ENCODE measurements at regions of chr1 and their contacts with region 1.

Region 1: DNA sequence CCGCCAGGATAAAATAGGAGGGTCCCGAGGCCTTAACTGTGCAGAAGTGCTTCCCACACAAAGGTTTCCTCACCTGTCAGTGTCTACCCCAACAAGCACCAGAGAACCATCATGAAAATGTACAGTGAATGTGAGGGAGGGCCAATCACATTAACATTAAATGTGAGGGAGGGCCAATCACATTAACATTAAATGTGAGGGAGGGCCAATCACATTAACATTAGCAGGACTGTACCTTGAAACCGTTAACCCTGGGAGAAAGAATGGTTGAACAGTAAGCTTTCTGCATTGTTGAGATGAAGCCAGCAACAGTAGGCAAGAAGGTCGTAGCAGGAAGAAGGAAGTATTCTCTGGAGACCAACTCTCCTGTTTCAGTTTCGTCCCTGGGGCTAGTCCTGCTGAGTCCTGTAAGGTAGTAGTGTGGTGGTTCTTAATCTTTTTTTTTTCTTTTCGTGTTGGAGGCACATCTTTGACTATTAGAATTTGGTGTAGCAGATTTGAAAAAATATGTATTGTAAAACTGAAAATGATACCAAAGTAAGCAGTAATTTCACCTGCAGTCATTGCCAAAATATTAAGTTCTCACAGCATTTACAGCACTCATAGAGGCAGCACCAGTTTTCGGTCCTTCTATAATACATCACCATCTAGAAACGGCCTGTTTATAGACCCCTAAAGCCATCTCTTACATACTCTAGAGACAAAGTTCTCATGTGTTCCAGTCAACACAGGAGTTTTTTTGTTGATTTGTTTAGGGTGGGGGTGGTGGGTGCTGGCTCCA is 98.6 kb upstream of the PPP2R5A start:
- DNase-seq: peak in 3 of 9 donors; percentile 11 to 20 (median 15)
- ATAC-seq: peak; percentile 81
- H3K4me3 ChIP-seq: peak overlapping the region; percentile 38
- H3K4me3 Mint-ChIP-seq: peak overlapping the region; percentile 38 to 84 (median 80)
- H3K27ac ChIP-seq: peak overlapping the region; percentile 23
- H3K27ac Mint-ChIP-seq: peak overlapping the region; percentile 39 to 93 (median 87)
- H3K4me1 ChIP-seq: peaks cover 4 to 7% of the 10 kb centered on the region in 2 donors
- H3K4me1 Mint-ChIP-seq: peaks cover 15 to 38% (median 26%) of the 10 kb centered on the region in 7 donors
- H3K27me3 ChIP-seq: no peaks in the 10 kb centered on the region
- H3K27me3 Mint-ChIP-seq: no peaks in the 10 kb centered on the region

Region 2: DNA sequence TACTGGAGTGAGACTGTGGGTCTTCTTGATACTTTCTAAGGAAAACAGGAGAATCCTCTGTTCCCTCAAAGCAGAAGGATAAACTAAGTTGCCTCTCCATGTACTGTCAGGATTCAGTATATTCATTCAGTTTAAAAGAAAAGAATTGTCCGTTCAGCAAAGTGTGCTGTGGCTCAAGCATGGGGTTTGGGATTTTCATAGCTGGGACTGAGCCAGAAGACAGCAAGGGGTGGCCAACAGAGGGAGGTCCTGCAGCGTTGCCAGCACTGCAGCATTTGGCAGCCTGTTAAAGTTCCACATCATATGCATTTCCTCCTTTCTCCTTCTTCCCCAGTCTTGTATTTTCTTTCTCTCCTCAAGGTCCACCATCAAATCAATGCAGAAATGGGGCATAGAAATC is 76.0 kb before region 1 on chr1:
- CTCF ChIA-PET with region 1: no interaction called
- POLR2A ChIA-PET with region 1: no interaction called
- intact Hi-C with region 1: loop called in 1 of 2 experiments (anchors 10 kb)
- DNase-seq: no peak
- ATAC-seq: no peak
- H3K4me3 ChIP-seq: no peak overlapping the region
- H3K4me3 Mint-ChIP-seq: no peak overlapping the region
- H3K27ac ChIP-seq: no peak overlapping the region
- H3K27ac Mint-ChIP-seq: no peak overlapping the region
- H3K4me1 ChIP-seq: no peaks in the 10 kb centered on the region
- H3K4me1 Mint-ChIP-seq: peaks cover 0 to 14% (median 9%) of the 10 kb centered on the region in 7 donors
- H3K27me3 ChIP-seq: no peaks in the 10 kb centered on the region
- H3K27me3 Mint-ChIP-seq: no peaks in the 10 kb centered on the region

Region 3: GRCh38 chr1:212162635-212163034 is 24.0 kb before region 1 on chr1:
- CTCF ChIA-PET with region 1: no interaction called
- POLR2A ChIA-PET with region 1: no interaction called
- intact Hi-C with region 1: loop called in 1 of 2 experiments (anchors 2 kb)
- DNase-seq: peak in 7 of 9 donors; percentile 1 to 31 (median 23)
- ATAC-seq: no peak
- H3K4me3 ChIP-seq: peak overlapping the region; percentile 0
- H3K4me3 Mint-ChIP-seq: peak overlapping the region in 8 of 10 donors; percentile 27 to 77 (median 54)
- H3K27ac ChIP-seq: no peak overlapping the region
- H3K27ac Mint-ChIP-seq: peak overlapping the region in 6 of 9 donors; percentile 6 to 46 (median 28)
- H3K4me1 ChIP-seq: peaks cover 11 to 26% of the 10 kb centered on the region in 2 donors
- H3K4me1 Mint-ChIP-seq: peaks cover 17 to 40% (median 30%) of the 10 kb centered on the region in 7 donors
- H3K27me3 ChIP-seq: no peaks in the 10 kb centered on the region
- H3K27me3 Mint-ChIP-seq: no peaks in the 10 kb centered on the region

Region 4: DNA sequence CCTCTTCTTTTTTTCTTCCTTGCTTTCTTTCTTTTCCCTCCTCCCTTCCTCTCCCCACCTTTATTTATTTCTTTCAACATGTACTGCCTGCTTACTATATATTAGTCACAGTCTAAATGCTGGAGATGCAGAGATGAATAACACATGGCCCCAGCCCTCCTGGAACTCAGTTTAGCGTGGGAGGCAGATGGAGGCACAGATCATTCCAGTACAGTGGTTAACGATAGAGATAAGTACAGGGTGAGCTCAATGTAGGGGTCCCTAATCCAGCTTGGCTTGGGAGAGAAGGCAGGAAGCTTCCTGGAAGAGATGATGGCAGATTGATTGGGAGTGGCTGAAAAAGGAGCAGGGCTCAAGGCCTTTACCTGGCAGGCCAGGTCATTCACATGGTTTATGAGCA is 43.0 kb after region 1 on chr1:
- CTCF ChIA-PET with region 1: no interaction called
- POLR2A ChIA-PET with region 1: no interaction called
- intact Hi-C with region 1: loop called in 1 of 2 experiments (anchors 2 kb)
- DNase-seq: no peak
- ATAC-seq: no peak
- H3K4me3 ChIP-seq: no peak overlapping the region
- H3K4me3 Mint-ChIP-seq: no peak overlapping the region
- H3K27ac ChIP-seq: no peak overlapping the region
- H3K27ac Mint-ChIP-seq: peak overlapping the region in 1 of 9 donors; percentile 12
- H3K4me1 ChIP-seq: peaks cover 14 to 23% of the 10 kb centered on the region in 2 donors
- H3K4me1 Mint-ChIP-seq: peaks cover 19 to 53% (median 29%) of the 10 kb centered on the region in 7 donors
- H3K27me3 ChIP-seq: no peaks in the 10 kb centered on the region
- H3K27me3 Mint-ChIP-seq: no peaks in the 10 kb centered on the region

Measured in naive thymus-derived CD4-positive, alpha-beta T cell (primary cell).